A673 (cell line): ENCODE measurements at regions of chr6 and their contacts with region 1.

Region 1: GRCh38 chr6:148620579-148621298 is 126.1 kb upstream of the UST start:
- DNase-seq: no peak
- H3K4me3 ChIP-seq: no peak overlapping the region
- H3K27ac ChIP-seq: no peak overlapping the region
- H3K4me1 ChIP-seq: no peaks in the 10 kb centered on the region
- H3K27me3 ChIP-seq: no peaks in the 10 kb centered on the region
- CTCF ChIP-seq: no peak

Region 2: GRCh38 chr6:148329596-148330381 is 290.9 kb before region 1 on chr6:
- CTCF ChIA-PET with region 1: no interaction called
- POLR2A ChIA-PET with region 1: no interaction called
- intact Hi-C with region 1: no loop called
- DNase-seq: peak; percentile 65
- H3K4me3 ChIP-seq: no peak overlapping the region
- H3K27ac ChIP-seq: peak overlapping the region; percentile 55
- H3K4me1 ChIP-seq: peaks cover 39% of the 10 kb centered on the region
- H3K27me3 ChIP-seq: no peaks in the 10 kb centered on the region
- CTCF ChIP-seq: no peak

Region 3: DNA sequence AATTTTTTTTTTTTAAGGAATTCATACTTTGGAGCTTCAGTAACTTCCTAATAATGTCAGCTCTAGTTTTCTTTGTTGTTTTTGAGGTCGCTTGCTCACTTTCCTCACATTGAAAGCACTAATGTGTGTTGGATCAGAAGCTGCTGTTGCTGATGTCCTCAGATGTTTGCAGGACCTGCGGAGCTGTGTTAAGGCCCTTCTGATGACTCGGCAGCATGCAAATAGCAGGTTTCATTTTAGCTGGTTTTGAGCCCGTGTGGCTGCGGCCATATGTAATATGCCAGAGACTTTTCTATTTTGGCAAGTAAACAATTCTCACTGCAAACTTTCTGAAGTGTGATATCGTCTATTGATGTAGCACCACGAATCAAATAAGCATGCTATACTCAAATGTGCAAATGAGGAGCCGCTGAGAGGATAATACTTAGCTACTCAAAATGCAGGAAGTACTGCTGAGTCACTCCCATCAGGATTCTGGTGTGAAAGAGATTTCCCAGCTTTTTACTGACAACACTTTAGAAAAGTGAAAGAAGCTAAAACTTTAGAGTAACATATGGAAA is 90.3 kb before region 1 on chr6:
- CTCF ChIA-PET with region 1: no interaction called
- POLR2A ChIA-PET with region 1: no interaction called
- intact Hi-C with region 1: no loop called
- DNase-seq: peak; percentile 89
- H3K4me3 ChIP-seq: no peak overlapping the region
- H3K27ac ChIP-seq: peak overlapping the region; percentile 89
- H3K4me1 ChIP-seq: peaks cover 22% of the 10 kb centered on the region
- H3K27me3 ChIP-seq: no peaks in the 10 kb centered on the region
- CTCF ChIP-seq: no peak

Region 4: DNA sequence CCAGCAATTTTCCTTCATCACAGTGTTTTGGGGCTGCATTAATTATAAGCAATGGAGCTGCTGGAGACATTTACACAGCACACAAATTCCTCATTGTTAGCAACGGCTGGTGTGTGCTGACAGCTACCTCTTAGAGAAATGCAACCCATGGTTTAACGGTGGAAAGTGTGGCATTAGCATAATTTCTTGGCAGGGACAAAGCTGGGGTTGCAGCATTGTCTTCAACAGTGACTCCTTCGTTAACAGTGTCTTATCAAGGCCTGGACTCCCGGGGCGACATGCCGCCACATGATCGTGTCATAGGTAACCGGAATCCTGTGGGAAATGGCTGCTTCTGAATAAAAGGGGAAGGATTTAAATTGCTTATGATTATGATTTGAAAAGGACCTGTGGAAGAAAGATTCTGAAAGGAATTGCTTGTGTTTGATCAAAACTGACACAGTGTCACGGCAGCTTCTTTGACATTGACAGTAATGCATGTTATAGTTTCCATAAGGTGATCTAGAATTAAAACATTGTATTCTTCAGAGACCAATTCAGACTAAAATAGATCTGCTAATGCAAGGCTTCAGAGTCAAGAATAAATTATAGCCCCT is 254.1 kb after region 1 on chr6:
- CTCF ChIA-PET with region 1: no interaction called
- POLR2A ChIA-PET with region 1: no interaction called
- intact Hi-C with region 1: no loop called
- DNase-seq: peak; percentile 78
- H3K4me3 ChIP-seq: no peak overlapping the region
- H3K27ac ChIP-seq: no peak overlapping the region
- H3K4me1 ChIP-seq: no peaks in the 10 kb centered on the region
- H3K27me3 ChIP-seq: no peaks in the 10 kb centered on the region
- CTCF ChIP-seq: no peak

Region 5: GRCh38 chr6:149208134-149208601 is 587.4 kb after region 1 on chr6:
- CTCF ChIA-PET with region 1: interaction called, 11 read pairs
- POLR2A ChIA-PET with region 1: no interaction called
- intact Hi-C with region 1: no loop called
- DNase-seq: no peak
- H3K4me3 ChIP-seq: no peak overlapping the region
- H3K27ac ChIP-seq: no peak overlapping the region
- H3K4me1 ChIP-seq: no peaks in the 10 kb centered on the region
- H3K27me3 ChIP-seq: no peaks in the 10 kb centered on the region
- CTCF ChIP-seq: no peak